Mucosa of descending colon (tissue), 3 donors: ENCODE measurements at regions of chr20 and their contacts with region 1.

Region 1: DNA sequence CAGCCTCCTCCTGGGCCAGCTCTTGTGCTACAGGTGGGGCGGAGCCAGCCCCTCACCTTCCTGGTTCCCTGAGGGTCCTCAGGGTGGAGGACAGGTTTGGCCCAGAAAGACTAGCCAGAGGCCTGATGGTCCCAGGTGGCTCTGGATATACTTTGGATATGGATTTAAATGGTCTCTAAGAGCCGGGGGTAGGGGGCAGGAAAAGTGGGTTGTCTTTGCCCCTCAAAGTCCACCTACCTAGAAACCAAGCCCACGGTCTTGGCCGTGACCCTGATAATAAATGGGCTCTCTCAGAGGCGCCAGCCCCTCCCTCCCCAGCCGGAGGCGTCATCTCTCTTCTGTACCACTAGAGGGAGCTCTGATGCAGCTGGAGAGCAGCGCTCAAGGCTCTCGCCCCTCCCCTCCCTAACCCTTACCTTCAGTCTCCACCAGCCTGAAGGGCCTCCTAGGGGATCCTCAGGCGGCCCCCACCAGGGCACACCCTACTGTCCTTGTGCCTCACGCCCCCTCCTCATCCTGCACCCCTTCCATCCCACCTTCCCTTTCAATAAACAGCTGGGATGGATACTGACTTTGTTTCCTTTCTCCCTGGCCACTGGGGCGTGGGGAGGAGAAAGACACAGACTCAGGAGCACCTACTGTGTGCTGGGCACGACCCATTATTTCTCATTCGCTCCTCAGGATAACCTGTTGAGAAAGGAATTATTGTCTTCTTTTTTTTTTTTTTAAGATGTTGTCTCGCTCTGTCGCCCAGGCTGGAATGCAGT is 7.6 kb downstream of the NRSN2 start:
- DNase-seq: peak; percentile 72 to 81 (median 81)
- ATAC-seq: peak; percentile 99
- H3K4me3 ChIP-seq: no peak overlapping the region
- H3K4me1 ChIP-seq: peaks cover 5% of the 10 kb centered on the region
- CTCF ChIP-seq: peak; percentile 80

Region 2: DNA sequence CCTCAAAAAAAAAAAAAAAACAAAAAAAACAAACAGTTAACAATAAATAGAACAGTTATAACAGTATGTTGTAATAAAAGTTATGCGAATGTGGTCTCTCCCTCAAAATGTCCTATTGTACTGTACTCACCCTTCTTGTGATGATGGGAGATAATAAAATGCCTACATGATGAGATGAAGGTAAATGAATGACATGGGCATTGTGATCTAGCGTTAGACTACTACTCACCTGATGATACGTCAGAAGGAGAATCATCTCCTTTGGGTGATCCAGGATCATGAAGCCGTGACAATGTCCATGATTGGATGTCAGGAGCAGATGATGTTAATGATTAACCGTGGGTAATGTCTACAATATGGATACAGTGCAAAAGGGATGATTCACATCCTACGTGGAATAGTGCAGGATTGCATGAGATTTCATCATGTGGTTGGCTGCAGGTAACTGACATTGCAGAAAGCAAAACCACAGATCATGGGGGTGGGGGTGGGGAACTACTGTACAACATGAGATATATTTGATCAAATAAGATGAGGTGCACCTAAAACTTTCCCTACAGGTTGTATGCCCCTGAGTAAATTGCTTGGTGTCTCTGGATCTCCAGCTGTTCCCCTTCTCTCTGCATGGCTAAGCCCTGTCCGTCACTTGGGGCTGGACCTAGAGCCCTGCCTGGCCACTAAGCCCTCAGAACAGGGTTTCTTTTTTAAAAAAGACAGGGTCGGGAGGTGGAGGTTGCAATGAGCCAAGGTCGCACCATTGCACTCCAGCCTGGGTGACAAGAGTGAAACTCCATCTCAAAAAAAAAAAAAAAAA is 47.4 kb after region 1 on chr20:
- intact Hi-C with region 1: no loop called
- DNase-seq: peak in 1 of 3 donors; percentile 47
- ATAC-seq: peak; percentile 96
- H3K4me3 ChIP-seq: no peak overlapping the region
- H3K4me1 ChIP-seq: peaks cover 2% of the 10 kb centered on the region
- CTCF ChIP-seq: no peak

Region 3: GRCh38 chr20:478949-479429 is 124.5 kb after region 1 on chr20:
- intact Hi-C with region 1: loop called (anchors 5 kb)
- DNase-seq: peak in 1 of 3 donors; percentile 77
- ATAC-seq: peak; percentile 61
- H3K4me3 ChIP-seq: no peak overlapping the region
- H3K4me1 ChIP-seq: peaks cover 10% of the 10 kb centered on the region
- CTCF ChIP-seq: no peak

Region 4: DNA sequence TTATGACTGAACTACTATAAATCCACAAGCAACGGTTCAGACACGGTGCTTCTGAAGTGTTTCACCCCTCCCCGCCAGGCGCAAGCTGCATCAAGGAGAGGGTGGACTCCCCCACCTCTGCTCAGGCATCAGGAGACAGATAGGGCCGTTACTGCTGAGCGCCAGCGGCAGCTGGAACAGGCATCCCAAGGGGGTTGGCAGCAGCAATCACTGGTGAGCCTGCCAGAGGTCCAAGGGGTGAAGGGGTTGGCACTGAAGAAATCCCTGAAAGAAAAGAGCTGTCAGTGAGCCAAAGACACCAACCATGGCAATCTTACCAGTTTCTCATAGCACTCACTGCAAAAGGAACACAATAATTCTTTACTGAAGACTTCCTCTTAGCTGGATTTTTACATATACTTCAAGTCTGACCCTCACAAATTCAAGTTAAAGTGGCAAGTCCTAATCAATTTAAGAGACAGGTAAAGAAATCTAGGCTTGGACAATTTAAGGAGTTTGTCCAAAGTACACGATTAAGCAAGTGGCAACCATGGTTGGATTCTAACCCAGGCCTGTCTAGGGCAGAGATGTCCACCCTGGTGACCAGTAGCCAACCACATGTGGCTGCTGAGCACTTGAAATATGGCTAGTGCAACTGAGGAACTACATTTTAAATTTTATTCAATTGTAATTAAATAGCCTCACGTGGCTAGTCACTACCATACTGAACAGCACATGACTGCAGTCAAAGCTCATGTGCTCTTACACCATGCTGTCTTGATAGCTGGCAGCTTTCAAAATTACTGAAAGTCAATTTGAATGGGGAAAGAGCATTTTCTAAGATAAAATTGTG is 129.5 kb after region 1 on chr20:
- intact Hi-C with region 1: loop called (anchors 5 kb)
- DNase-seq: no peak
- ATAC-seq: no peak
- H3K4me3 ChIP-seq: no peak overlapping the region
- H3K4me1 ChIP-seq: no peaks in the 10 kb centered on the region
- CTCF ChIP-seq: no peak

Region 5: GRCh38 chr20:584161-584970 is 229.9 kb after region 1 on chr20:
- intact Hi-C with region 1: no loop called
- DNase-seq: no peak
- ATAC-seq: peak; percentile 33
- H3K4me3 ChIP-seq: no peak overlapping the region
- H3K4me1 ChIP-seq: no peaks in the 10 kb centered on the region
- CTCF ChIP-seq: no peak

Region 6: GRCh38 chr20:645318-646106 is 291.0 kb after region 1 on chr20:
- intact Hi-C with region 1: loop called in 1 of 2 experiments (anchors 10 kb)
- DNase-seq: peak; percentile 67 to 85 (median 79)
- ATAC-seq: peak; percentile 93
- H3K4me3 ChIP-seq: no peak overlapping the region
- H3K4me1 ChIP-seq: no peaks in the 10 kb centered on the region
- CTCF ChIP-seq: peak; percentile 96